ENCODE measurements at regions of chr17 and their contacts with region 1.

Region 1: DNA sequence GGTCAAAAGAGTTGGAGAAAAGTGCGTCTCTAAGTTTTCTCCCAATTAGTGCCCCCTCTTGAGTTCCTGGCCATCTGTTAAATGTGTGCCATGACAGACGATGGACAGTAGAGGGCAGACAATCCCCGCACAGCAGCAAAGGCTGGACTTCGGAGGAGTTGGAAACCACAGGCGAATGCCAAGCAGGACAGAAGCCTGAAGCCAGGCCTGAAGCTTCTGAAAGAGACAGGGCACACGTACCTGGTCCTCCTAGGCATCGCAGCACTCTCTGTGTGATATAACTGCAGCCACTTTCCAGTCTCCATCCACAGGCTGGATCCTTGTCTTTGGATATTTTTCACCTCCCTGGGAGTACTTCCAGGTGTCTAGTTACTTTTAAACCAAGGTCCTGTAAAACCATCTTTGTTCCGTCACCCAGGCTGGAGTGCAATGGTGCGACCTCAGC is 14.5 kb downstream of the C17orf100 start:
- DNase-seq: peak; percentile 82
- H3K4me3 ChIP-seq: no peak overlapping the region
- H3K27ac ChIP-seq: no peak overlapping the region
- H3K4me1 ChIP-seq: no peaks in the 10 kb centered on the region
- H3K27me3 ChIP-seq: peaks cover 7 to 11% of the 10 kb centered on the region in 2 experiments
- CTCF ChIP-seq: peak; percentile 85 to 86
- POLR2A ChIP-seq: no peak

Region 2: GRCh38 chr17:6701719-6702118 is 35.6 kb after region 1 on chr17:
- CTCF ChIA-PET with region 1: interaction called, 19 read pairs
- POLR2A ChIA-PET with region 1: no interaction called
- dilution Hi-C with region 1: no loop called
- intact Hi-C with region 1: loop called (anchors 5 kb)
- DNase-seq: peak; percentile 10
- H3K4me3 ChIP-seq: no peak overlapping the region
- H3K27ac ChIP-seq: no peak overlapping the region
- H3K4me1 ChIP-seq: no peaks in the 10 kb centered on the region
- H3K27me3 ChIP-seq: no peaks in the 10 kb centered on the region
- CTCF ChIP-seq: peak; percentile 26 to 57
- POLR2A ChIP-seq: no peak

Region 3: DNA sequence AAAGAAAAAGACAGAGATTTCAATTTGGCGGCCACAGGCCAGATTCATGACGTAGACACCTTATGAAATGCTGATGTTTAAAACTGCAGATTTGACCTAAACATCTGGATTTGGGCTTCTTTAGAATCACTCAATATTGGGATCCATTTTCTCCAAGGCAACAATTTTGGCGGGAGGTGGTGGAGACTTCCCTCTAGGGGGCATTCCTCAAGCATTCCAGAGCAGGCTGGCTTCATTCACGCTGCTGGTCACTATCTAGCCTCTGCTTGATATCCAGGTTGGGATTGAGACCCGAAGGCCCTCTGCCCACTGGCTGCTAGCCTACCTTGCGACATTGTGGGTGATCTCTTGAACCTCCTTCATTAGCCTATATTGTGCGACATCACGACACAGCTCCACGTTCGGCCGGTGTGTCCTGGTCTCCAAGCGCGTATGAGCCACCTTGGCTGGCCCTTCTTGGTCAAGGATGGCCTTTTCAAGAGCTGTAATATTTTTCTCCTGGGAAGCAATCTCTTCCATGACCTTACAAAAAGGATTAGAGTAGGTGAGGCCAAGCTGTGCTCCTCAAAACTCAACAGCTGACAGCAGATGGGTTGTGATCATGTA is 134.4 kb after region 1 on chr17:
- CTCF ChIA-PET with region 1: no interaction called
- POLR2A ChIA-PET with region 1: no interaction called
- dilution Hi-C with region 1: no loop called
- intact Hi-C with region 1: loop called (anchors 1 kb)
- DNase-seq: peak; percentile 28
- H3K4me3 ChIP-seq: no peak overlapping the region
- H3K27ac ChIP-seq: no peak overlapping the region
- H3K4me1 ChIP-seq: no peaks in the 10 kb centered on the region
- H3K27me3 ChIP-seq: peaks cover 2 to 6% of the 10 kb centered on the region in 2 experiments
- CTCF ChIP-seq: peak; percentile 18 to 66
- POLR2A ChIP-seq: no peak

Region 4: DNA sequence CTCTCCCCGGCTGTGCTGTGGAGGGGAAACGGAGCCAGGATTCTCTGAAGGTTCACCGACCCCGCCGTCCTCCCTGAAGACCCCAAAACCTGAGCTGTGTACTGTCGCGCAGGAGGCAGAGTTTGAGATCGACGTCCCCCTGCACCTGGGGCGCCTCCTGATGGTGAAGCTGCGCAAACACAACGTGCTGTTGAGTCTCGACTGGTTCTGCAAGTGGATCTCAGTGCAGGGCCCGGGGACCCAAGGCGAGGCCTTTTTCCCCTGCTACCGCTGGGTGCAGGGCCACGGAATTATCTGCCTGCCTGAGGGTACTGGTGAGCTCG is 228.1 kb after region 1 on chr17:
- CTCF ChIA-PET with region 1: interaction called, 42 read pairs
- POLR2A ChIA-PET with region 1: no interaction called
- dilution Hi-C with region 1: no loop called
- intact Hi-C with region 1: loop called (anchors 1 kb)
- DNase-seq: peak; percentile 28
- H3K4me3 ChIP-seq: no peak overlapping the region
- H3K27ac ChIP-seq: no peak overlapping the region
- H3K4me1 ChIP-seq: no peaks in the 10 kb centered on the region
- H3K27me3 ChIP-seq: peaks cover 56 to 62% of the 10 kb centered on the region in 2 experiments
- CTCF ChIP-seq: peak; percentile 46 to 71
- POLR2A ChIP-seq: no peak

Region 5: DNA sequence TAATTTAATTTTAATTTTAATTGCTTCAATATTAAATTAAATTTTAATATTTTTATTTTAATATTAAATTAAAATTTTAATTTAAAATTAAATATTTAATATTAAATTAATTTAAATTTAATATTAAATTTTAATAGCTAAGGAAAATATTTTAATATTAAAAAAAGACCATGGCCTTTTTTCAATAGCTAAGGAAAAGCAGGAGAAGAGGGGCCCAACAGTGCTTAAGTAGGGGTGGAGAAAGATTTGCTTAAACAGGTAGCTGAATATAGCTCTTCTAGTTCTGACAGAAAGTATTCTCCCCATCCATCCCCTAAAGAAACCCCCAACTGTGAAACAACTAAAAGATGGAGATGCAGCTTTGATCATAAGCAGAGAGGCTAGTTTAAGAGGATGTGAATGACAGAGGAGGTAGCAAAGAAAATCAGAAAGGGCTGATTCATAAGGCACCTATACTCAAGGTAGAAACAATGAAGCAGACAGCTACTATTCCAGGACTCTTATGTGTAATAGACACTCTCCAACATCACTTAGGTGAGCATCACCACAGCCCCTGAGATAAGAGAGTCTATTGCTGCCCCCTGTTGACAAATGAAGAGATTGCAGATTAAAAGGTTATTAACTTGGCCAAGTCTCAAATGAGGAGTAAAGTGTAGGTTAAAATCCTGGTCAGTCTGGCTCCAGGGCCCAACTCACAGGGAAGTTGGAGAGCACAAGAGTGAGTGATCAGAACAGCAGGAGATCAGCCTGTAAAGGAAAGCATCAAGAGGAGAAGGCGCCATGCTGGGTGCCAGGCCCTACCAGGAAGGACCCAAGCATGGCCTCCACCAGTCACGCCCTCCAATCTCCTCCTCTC is 338.5 kb after region 1 on chr17:
- CTCF ChIA-PET with region 1: interaction called, 15 read pairs
- POLR2A ChIA-PET with region 1: no interaction called
- dilution Hi-C with region 1: no loop called
- intact Hi-C with region 1: loop called (anchors 1 kb)
- DNase-seq: peak; percentile 66
- H3K4me3 ChIP-seq: no peak overlapping the region
- H3K27ac ChIP-seq: no peak overlapping the region
- H3K4me1 ChIP-seq: no peaks in the 10 kb centered on the region
- H3K27me3 ChIP-seq: no peaks in the 10 kb centered on the region
- CTCF ChIP-seq: peak; percentile 53 to 58
- POLR2A ChIP-seq: no peak

Region 6: GRCh38 chr17:7021993-7022778 is 356.1 kb after region 1 on chr17:
- CTCF ChIA-PET with region 1: interaction called, 12 read pairs
- POLR2A ChIA-PET with region 1: no interaction called
- dilution Hi-C with region 1: no loop called
- intact Hi-C with region 1: no loop called
- DNase-seq: peak; percentile 97
- H3K4me3 ChIP-seq: peak overlapping the region in 2 of 3 experiments; percentile 59 to 90
- H3K27ac ChIP-seq: peak overlapping the region; percentile 96
- H3K4me1 ChIP-seq: peaks cover 58% of the 10 kb centered on the region
- H3K27me3 ChIP-seq: no peaks in the 10 kb centered on the region
- CTCF ChIP-seq: peak; percentile 97 to 99
- POLR2A ChIP-seq: peak; percentile 66